Activated T-helper 1 cell treated with anti-CD3 and anti-CD28 coated beads, Interleukin-12 subunit alpha, Interleukin-12 subunit beta, Interleukin-2, Interleukin-4 antibody, amounts not matched to agents 30 ng/mL and 10 ng/mL and 1 ng/mL, durations not matched to agents 14 hours and 24 hours and 36 hours (primary cell): ENCODE measurements at regions of chr2 and their contacts with region 1.

Region 1: DNA sequence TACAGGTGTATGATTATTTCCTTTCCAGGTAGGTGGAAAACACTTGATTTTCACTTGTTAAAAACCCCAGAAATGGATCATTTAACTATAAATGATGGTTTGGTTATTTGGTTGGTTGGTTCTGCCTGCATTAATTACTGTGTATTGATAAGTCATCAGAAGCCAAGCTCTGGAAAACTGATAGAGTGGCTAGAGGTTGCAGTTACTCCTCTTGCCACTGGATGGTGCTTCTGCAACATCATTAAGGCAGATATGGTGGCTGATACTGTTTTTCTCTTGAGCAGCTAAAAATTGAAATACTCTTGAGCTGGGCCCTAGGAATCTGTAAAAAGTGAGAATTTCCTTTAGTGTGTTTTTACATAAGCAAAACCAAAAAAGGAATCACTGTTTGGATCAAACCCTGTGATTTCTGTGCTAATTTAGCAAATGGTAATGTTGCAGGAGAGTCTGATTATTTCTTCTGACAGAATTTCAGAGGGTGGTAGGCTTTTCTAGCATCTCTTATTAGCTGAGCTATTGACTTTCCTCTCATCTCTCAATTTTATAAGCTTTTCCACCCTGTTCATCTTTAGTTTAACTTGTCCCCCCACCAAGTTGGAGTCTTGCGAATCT is 54.3 kb downstream of the RAB10 start:
- DNase-seq: no peak
- H3K4me3 Mint-ChIP-seq: no peak overlapping the region
- H3K27ac Mint-ChIP-seq: no peak overlapping the region
- H3K4me1 Mint-ChIP-seq: peaks cover 49% of the 10 kb centered on the region
- H3K27me3 Mint-ChIP-seq: no peaks in the 10 kb centered on the region

Region 2: DNA sequence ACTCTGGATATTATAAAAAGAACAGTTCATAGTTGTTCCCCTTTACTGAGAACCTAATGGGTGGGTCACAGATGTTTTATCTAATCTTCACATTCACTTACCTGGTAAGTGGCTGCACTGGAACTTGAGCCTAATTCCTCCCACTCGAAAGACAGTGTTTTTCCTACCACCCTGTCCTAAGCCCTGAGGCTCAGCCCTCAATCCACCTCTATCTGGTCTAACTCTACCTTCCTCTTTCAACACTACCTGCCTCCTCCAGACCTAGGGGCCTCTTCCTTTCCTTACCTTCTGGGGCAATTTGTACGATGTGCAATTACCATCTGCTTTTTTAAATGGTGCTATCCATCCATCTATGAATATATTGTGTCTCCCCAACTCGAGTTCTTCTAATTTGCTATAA is 96.2 kb before region 1 on chr2:
- intact Hi-C with region 1: loop called (anchors 5 kb)
- DNase-seq: no peak
- H3K4me3 Mint-ChIP-seq: no peak overlapping the region
- H3K27ac Mint-ChIP-seq: no peak overlapping the region
- H3K4me1 Mint-ChIP-seq: peaks cover 22% of the 10 kb centered on the region
- H3K27me3 Mint-ChIP-seq: peaks cover 9% of the 10 kb centered on the region

Region 3: GRCh38 chr2:26033818-26034636 is 54.1 kb before region 1 on chr2 and contains the start of gene RAB10:
- intact Hi-C with region 1: loop called (anchors 1 kb)
- DNase-seq: peak; percentile 100
- H3K4me3 Mint-ChIP-seq: peak within 1 kb of the TSS; percentile 94
- H3K27ac Mint-ChIP-seq: peak within 1 kb of the TSS; percentile 93
- H3K4me1 Mint-ChIP-seq: peaks cover 26% of the 10 kb centered on the region
- H3K27me3 Mint-ChIP-seq: no peaks in the 10 kb centered on the region
- total RNA-seq, gene RAB10: 128 and 130 TPM in 2 replicates

Region 4: DNA sequence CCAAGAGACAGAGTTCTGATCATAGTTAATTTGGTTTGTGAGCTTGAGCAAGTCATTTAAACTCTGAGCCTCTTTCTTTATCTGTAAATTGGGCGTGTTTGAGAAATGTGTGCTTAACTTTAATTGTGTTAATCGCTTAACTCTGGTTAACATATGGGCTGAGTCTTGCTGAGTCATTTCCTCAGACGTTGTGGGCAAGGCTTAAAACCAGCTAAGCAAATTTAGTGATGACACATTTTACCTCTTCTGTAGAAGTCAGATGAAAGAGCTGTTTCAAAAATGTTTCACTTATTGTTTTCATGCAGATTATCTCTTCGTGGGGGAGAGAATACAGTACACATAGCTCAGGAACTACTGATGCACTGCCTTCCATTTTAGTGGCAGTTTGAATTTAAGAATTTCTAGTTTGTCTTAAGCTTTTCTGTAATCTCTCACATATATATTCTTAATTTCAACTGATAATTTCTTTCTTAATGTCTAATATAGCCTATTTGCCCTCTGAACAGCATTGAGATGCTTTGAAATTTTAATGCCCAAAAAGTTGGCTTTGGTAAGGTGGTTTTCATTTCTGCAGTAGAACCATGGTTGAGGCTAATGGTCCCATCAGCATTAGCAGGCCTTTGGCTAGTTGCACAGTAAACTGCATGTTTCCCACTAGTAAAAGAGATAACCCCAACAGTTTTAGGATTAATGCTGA is 19.4 kb before region 1 on chr2:
- intact Hi-C with region 1: loop called (anchors 1 kb)
- DNase-seq: peak; percentile 64
- H3K4me3 Mint-ChIP-seq: peak overlapping the region; percentile 27
- H3K27ac Mint-ChIP-seq: peak overlapping the region; percentile 93
- H3K4me1 Mint-ChIP-seq: peaks cover 68% of the 10 kb centered on the region
- H3K27me3 Mint-ChIP-seq: no peaks in the 10 kb centered on the region

Region 5: GRCh38 chr2:26122630-26123029 is 34.5 kb after region 1 on chr2:
- intact Hi-C with region 1: loop called (anchors 5 kb)
- DNase-seq: no peak
- H3K4me3 Mint-ChIP-seq: no peak overlapping the region
- H3K27ac Mint-ChIP-seq: no peak overlapping the region
- H3K4me1 Mint-ChIP-seq: peaks cover 18% of the 10 kb centered on the region
- H3K27me3 Mint-ChIP-seq: no peaks in the 10 kb centered on the region

Region 6: GRCh38 chr2:26144953-26145680 is 57.0 kb after region 1 on chr2:
- intact Hi-C with region 1: loop called (anchors 1 kb)
- DNase-seq: peak; percentile 43
- H3K4me3 Mint-ChIP-seq: no peak overlapping the region
- H3K27ac Mint-ChIP-seq: no peak overlapping the region
- H3K4me1 Mint-ChIP-seq: no peaks in the 10 kb centered on the region
- H3K27me3 Mint-ChIP-seq: peaks cover 7% of the 10 kb centered on the region

Region 7: DNA sequence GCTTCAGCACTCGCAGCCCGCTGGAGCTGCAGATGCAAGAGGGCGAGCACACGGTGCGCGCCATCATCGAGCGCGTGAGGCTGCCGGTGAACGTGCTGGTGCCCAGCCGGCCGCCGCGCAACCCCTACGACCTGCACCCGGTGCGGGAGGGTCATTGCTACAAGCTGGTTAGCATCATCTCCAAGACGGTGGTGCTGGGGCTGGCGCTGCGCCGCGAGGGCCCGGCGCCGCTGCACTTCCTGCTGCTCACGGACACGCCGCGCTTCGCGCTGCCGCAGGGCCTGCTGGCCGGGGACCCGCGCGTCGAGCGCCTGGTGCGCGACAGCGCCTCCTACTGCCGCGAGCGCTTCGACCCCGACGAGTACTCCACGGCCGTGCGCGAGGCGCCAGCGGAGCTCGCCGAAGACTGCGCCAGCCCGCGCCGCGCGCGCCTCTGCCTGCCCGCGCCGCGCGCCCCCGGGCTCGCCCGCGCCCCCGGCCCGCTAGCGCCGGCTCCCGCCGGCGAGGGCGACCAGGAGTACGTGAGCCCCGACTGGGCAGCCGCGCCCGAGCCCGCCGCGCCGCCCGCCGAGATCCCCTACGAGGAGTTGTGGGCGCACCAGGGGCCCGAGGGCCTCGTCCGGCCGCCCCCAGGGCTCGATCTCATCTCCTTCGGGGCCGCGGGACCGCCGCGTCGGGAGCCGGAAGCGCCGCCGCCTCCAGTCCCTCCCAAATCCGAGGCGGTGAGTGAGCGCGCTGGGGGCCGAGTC is 96.6 kb after region 1 on chr2:
- intact Hi-C with region 1: loop called (anchors 1 kb)
- DNase-seq: peak; percentile 86
- H3K4me3 Mint-ChIP-seq: peak overlapping the region; percentile 81
- H3K27ac Mint-ChIP-seq: no peak overlapping the region
- H3K4me1 Mint-ChIP-seq: peaks cover 12% of the 10 kb centered on the region
- H3K27me3 Mint-ChIP-seq: peaks cover 22% of the 10 kb centered on the region